ENCODE measurements at regions of chr1 and their contacts with region 1.

Region 1: GRCh38 chr1:87084244-87084836 is 169.9 kb downstream of the HS2ST1 start:
- DNase-seq: peak; percentile 71
- ATAC-seq: peak; percentile 45
- H3K4me3 ChIP-seq: no peak overlapping the region
- H3K27ac ChIP-seq: no peak overlapping the region
- H3K4me1 ChIP-seq: peaks cover 7% of the 10 kb centered on the region
- H3K27me3 ChIP-seq: no peaks in the 10 kb centered on the region
- CTCF ChIP-seq: peak; percentile 51

Region 2: GRCh38 chr1:86833461-86834215 is 250.7 kb before region 1 on chr1:
- CTCF ChIA-PET with region 1: interaction called, 3 read pairs
- POLR2A ChIA-PET with region 1: no interaction called
- intact Hi-C with region 1: loop called (anchors 1 kb)
- DNase-seq: peak; percentile 88
- ATAC-seq: peak; percentile 96
- H3K4me3 ChIP-seq: no peak overlapping the region
- H3K27ac ChIP-seq: no peak overlapping the region
- H3K4me1 ChIP-seq: no peaks in the 10 kb centered on the region
- H3K27me3 ChIP-seq: no peaks in the 10 kb centered on the region
- CTCF ChIP-seq: peak; percentile 81

Region 3: DNA sequence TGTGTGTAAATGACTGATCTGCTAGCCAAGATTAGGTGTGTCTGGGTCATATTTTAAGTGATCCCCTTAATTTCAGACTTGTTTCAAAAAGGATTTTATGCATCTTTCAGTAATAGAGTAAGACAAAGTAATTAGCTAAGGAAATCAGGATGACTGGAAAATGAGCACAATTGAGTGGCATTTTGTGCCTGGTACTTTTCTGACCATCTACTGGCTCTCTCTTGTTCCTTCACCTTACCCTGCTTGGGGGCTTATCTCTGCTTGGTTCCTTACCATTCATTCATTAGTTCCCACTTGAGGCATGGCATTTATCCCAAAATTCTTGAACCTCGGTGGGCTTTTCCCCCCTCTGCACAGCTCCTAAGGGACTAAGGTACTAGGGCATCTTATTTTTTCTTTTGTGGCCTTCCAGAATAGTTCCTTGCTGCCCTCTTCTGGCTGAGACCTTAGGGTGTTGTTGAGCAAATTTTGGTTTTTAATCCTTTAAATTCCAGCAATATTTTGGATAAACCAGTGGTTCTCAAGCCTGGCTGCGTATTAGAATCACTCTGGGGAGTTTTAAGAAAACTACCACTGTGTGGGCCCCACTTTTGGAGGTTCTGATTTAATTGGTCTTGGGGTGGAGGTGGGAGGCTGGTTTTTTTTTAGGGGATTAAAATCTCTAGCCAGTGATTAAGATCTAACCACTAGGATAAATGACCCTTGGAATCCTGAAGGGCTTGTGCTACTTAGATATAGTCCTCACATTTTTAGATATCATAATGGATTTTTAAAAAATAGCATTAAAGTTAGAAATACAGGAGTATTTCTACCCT is 119.1 kb before region 1 on chr1:
- CTCF ChIA-PET with region 1: no interaction called
- POLR2A ChIA-PET with region 1: no interaction called
- intact Hi-C with region 1: loop called (anchors 2 kb)
- DNase-seq: peak; percentile 57
- ATAC-seq: peak; percentile 61
- H3K4me3 ChIP-seq: no peak overlapping the region
- H3K27ac ChIP-seq: no peak overlapping the region
- H3K4me1 ChIP-seq: no peaks in the 10 kb centered on the region
- H3K27me3 ChIP-seq: no peaks in the 10 kb centered on the region
- CTCF ChIP-seq: peak; percentile 85

Region 4: GRCh38 chr1:87064986-87065385 is 19.4 kb before region 1 on chr1:
- CTCF ChIA-PET with region 1: no interaction called
- POLR2A ChIA-PET with region 1: no interaction called
- intact Hi-C with region 1: loop called (anchors 1 kb)
- DNase-seq: peak; percentile 54
- ATAC-seq: peak; percentile 83
- H3K4me3 ChIP-seq: no peak overlapping the region
- H3K27ac ChIP-seq: peak overlapping the region; percentile 70
- H3K4me1 ChIP-seq: peaks cover 31% of the 10 kb centered on the region
- H3K27me3 ChIP-seq: no peaks in the 10 kb centered on the region
- CTCF ChIP-seq: no peak